ENCODE measurements at regions of chr20 and their contacts with region 1.

Region 1: GRCh38 chr20:45436732-45437391 is 20.9 kb downstream of the PIGT start:
- DNase-seq: peak; percentile 70
- H3K4me3 ChIP-seq: peak overlapping the region; percentile 62 to 80 (median 72)
- H3K27ac ChIP-seq: no peak overlapping the region
- H3K4me1 ChIP-seq: no peaks in the 10 kb centered on the region
- H3K27me3 ChIP-seq: no peaks in the 10 kb centered on the region
- CTCF ChIP-seq: peak; percentile 88 to 98

Region 2: GRCh38 chr20:45373353-45374100 is 63.3 kb before region 1 on chr20:
- CTCF ChIA-PET with region 1: interaction called, 5 read pairs
- dilution Hi-C with region 1: loop called (anchors 10 kb)
- in situ Hi-C with region 1: loop called in 1 of 2 experiments (anchors 5 kb)
- intact Hi-C with region 1: loop called (anchors 1 kb)
- DNase-seq: peak; percentile 67
- H3K4me3 ChIP-seq: peak overlapping the region in 2 of 3 experiments; percentile 28 to 49
- H3K27ac ChIP-seq: no peak overlapping the region
- H3K4me1 ChIP-seq: peaks cover 3% of the 10 kb centered on the region
- H3K27me3 ChIP-seq: no peaks in the 10 kb centered on the region
- CTCF ChIP-seq: peak; percentile 95 to 96

Region 3: DNA sequence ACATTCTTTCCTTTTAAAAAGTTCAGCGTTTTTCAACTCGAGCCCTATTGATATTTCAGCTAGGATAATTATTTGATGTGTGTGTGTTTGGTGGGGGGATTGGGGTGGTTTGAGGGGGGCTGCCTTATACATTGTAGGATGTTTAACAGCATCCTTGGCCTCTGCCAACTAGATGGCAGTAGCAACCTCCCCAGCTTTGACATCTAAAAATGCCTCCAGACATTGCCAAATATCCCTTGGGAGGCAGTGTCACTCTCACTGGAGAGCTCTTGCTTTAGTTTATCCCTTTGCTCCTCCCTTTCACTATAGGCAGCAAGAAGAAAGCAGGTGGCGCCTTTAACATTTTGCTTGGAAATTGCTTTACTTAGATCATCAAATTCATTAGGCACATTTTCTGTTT is 44.1 kb before region 1 on chr20:
- CTCF ChIA-PET with region 1: interaction called, 13 read pairs
- dilution Hi-C with region 1: no loop called
- in situ Hi-C with region 1: no loop called
- intact Hi-C with region 1: no loop called
- DNase-seq: no peak
- H3K4me3 ChIP-seq: no peak overlapping the region
- H3K27ac ChIP-seq: no peak overlapping the region
- H3K4me1 ChIP-seq: no peaks in the 10 kb centered on the region
- H3K27me3 ChIP-seq: no peaks in the 10 kb centered on the region
- CTCF ChIP-seq: peak in 1 of 2 donors; percentile 29